ENCODE measurements at regions of chr14 and their contacts with region 1.

Region 1: DNA sequence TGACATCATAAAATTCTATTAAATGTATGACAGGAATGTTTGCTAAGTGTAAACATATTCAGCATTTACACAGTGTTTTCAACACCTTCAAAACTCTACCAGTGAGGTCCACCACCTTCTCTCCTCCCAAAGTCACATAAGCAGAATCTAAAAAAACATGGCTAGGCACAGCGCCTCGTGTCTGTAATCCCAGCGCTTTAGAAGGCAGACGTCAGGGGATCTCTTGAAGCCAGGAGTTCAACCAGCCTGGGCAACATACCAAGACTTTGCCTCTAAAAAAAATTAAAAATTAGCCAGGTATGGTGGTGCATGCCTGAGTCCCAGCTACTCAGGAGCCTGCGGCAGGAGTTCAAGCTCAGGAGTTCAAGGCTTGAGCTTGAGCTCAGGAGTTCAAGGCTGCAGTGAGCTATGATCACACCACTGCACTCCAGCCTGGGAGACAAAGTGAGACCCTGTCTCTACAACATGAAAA is 30.0 kb downstream of the NUMB start:
- DNase-seq: no peak
- ATAC-seq: peak; percentile 74
- H3K4me3 ChIP-seq: no peak overlapping the region
- H3K27ac ChIP-seq: no peak overlapping the region
- H3K4me1 ChIP-seq: 0 out of 2 replicates have a peak, but pooled peaks cover 4% of the 10 kb centered on the region
- H3K27me3 ChIP-seq: no peaks in the 10 kb centered on the region
- CTCF ChIP-seq: no peak

Region 2: GRCh38 chr14:73458151-73458976 is 30.0 kb after region 1 on chr14 and contains the start of gene NUMB:
- CTCF ChIA-PET with region 1: no interaction called
- POLR2A ChIA-PET with region 1: no interaction called
- intact Hi-C with region 1: loop called (anchors 1 kb)
- DNase-seq: peak; percentile 100
- ATAC-seq: peak; percentile 94
- H3K4me3 ChIP-seq: peak within 1 kb of the TSS; percentile 90
- H3K27ac ChIP-seq: peak within 1 kb of the TSS; percentile 11; the same call in 1 of the 2 replicates
- H3K4me1 ChIP-seq: peaks cover 37% of the 10 kb centered on the region
- H3K27me3 ChIP-seq: no peaks in the 10 kb centered on the region
- CTCF ChIP-seq: no peak
- total RNA-seq, gene NUMB: 22.2 and 26.8 TPM in 2 replicates

Region 3: GRCh38 chr14:73477618-73478266 is 49.4 kb after region 1 on chr14:
- CTCF ChIA-PET with region 1: no interaction called
- POLR2A ChIA-PET with region 1: no interaction called
- intact Hi-C with region 1: no loop called
- DNase-seq: no peak
- ATAC-seq: no peak
- H3K4me3 ChIP-seq: no peak overlapping the region
- H3K27ac ChIP-seq: no peak overlapping the region
- H3K4me1 ChIP-seq: no peaks in the 10 kb centered on the region
- H3K27me3 ChIP-seq: no peaks in the 10 kb centered on the region
- CTCF ChIP-seq: no peak